A549 (cell line): ENCODE measurements at regions of chr1 and their contacts with region 1.

Region 1: GRCh38 chr1:244864253-244865027 is at the start of gene HNRNPU:
- DNase-seq: peak; percentile 66 to 98
- ATAC-seq: peak; percentile 75 to 90
- H3K4me3 ChIP-seq: peak within 1 kb of the TSS; percentile 100
- H3K27ac ChIP-seq: peak within 1 kb of the TSS; percentile 96 to 100
- H3K4me1 ChIP-seq: peaks cover 37% of the 10 kb centered on the region
- CTCF ChIP-seq: no peak; the same call in 2 of the 3 replicates
- EP300 ChIP-seq: no peak
- POLR2A ChIP-seq: peak; percentile 97
- RAD21 ChIP-seq: peak; percentile 7 to 9; a peak in 1 of 5 replicates
- polyA plus RNA-seq, gene HNRNPU: 345 and 529 TPM in 2 replicates

Region 2: GRCh38 chr1:244730153-244730933 is 134.1 kb before region 1 on chr1:
- CTCF ChIA-PET with region 1: no interaction called
- POLR2A ChIA-PET with region 1: no interaction called
- DNase-seq: peak in 1 of 2 experiments; percentile 35
- ATAC-seq: peak; percentile 77 to 83
- H3K4me3 ChIP-seq: peak overlapping the region; percentile 43
- H3K27ac ChIP-seq: peak overlapping the region; percentile 57 to 88
- H3K4me1 ChIP-seq: peaks cover 4% of the 10 kb centered on the region; the same call in 1 of the 3 replicates
- CTCF ChIP-seq: no peak
- EP300 ChIP-seq: no peak
- POLR2A ChIP-seq: no peak
- RAD21 ChIP-seq: no peak

Region 3: GRCh38 chr1:244835276-244836134 is 28.9 kb before region 1 on chr1 and contains the start of gene COX20:
- CTCF ChIA-PET with region 1: interaction called, 17 read pairs
- POLR2A ChIA-PET with region 1: interaction called, 57 read pairs
- DNase-seq: peak; percentile 66 to 95
- ATAC-seq: peak; percentile 72 to 78
- H3K4me3 ChIP-seq: peak within 1 kb of the TSS; percentile 69
- H3K27ac ChIP-seq: peak within 1 kb of the TSS; percentile 90 to 97
- H3K4me1 ChIP-seq: peaks cover 26% of the 10 kb centered on the region; the same call in 2 of the 3 replicates
- CTCF ChIP-seq: no peak
- EP300 ChIP-seq: no peak
- POLR2A ChIP-seq: peak; percentile 69
- RAD21 ChIP-seq: no peak
- polyA plus RNA-seq, gene COX20: 28.1 and 65.4 TPM in 2 replicates

Region 4: DNA sequence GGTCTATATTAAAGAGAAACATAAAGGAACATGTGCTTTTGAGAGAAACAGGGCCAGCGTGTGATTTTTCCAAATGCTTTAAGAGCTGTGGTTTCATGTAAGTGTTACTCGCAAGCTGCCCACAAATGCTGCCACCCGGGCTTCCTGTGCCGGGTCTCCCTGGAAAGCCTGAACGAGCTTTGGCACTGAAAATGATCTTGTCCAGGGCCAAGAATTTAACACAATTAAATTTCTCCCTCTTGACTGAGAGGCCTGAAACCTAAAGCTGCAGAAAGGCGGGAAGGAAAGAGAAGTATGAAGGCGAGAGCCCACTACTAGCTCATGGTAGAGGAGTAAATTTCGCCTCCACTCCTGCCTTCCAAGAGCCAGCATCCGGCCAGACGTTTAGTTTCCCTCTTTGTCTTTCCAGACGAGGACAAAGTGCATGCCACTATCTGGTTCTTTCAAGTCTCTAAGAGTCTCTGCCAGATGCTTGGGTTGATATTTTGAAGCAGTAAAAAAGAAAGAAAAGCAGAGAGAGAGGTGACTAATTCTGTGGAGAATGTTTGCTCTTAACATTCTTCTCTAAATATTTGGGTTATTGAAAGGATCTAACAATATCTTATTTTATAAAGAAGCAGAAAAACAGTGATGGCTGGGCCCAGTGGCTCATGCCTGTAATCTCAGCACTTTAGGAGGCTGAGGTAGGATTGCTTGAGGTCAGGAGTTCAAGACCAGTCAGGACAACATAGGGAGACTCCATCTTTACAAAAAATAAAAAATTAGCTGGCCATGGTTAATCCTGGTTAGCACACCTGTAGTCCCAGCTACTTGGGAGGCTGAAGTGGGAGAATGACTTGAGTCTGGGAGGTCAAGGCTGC is 99.9 kb after region 1 on chr1:
- CTCF ChIA-PET with region 1: interaction called, 4 read pairs
- POLR2A ChIA-PET with region 1: interaction called, 102 read pairs
- DNase-seq: peak in 1 of 2 experiments; percentile 79
- ATAC-seq: peak; percentile 61 to 82
- H3K4me3 ChIP-seq: no peak overlapping the region
- H3K27ac ChIP-seq: peak overlapping the region; percentile 86
- H3K4me1 ChIP-seq: peaks cover 62% of the 10 kb centered on the region
- CTCF ChIP-seq: no peak
- EP300 ChIP-seq: no peak
- POLR2A ChIP-seq: no peak
- RAD21 ChIP-seq: peak; percentile 14 to 23; a peak in 1 of 5 replicates

Region 5: GRCh38 chr1:246161626-246162025 is 1297.2 kb after region 1 on chr1:
- CTCF ChIA-PET with region 1: no interaction called
- POLR2A ChIA-PET with region 1: no interaction called
- DNase-seq: no peak
- ATAC-seq: no peak
- H3K4me3 ChIP-seq: no peak overlapping the region
- H3K27ac ChIP-seq: no peak overlapping the region
- H3K4me1 ChIP-seq: 0 out of 3 replicates have a peak, but pooled peaks cover 3% of the 10 kb centered on the region
- CTCF ChIP-seq: no peak
- EP300 ChIP-seq: no peak
- POLR2A ChIP-seq: no peak
- RAD21 ChIP-seq: no peak